Astrocyte of the cerebellum (primary cell): ENCODE measurements at regions of chr19 and their contacts with region 1.

Region 1: GRCh38 chr19:43446746-43447489 is 18.5 kb downstream of the LYPD3 start:
- DNase-seq: peak; percentile 59
- H3K4me3 ChIP-seq: no peak overlapping the region
- CTCF ChIP-seq: peak; percentile 94

Region 2: DNA sequence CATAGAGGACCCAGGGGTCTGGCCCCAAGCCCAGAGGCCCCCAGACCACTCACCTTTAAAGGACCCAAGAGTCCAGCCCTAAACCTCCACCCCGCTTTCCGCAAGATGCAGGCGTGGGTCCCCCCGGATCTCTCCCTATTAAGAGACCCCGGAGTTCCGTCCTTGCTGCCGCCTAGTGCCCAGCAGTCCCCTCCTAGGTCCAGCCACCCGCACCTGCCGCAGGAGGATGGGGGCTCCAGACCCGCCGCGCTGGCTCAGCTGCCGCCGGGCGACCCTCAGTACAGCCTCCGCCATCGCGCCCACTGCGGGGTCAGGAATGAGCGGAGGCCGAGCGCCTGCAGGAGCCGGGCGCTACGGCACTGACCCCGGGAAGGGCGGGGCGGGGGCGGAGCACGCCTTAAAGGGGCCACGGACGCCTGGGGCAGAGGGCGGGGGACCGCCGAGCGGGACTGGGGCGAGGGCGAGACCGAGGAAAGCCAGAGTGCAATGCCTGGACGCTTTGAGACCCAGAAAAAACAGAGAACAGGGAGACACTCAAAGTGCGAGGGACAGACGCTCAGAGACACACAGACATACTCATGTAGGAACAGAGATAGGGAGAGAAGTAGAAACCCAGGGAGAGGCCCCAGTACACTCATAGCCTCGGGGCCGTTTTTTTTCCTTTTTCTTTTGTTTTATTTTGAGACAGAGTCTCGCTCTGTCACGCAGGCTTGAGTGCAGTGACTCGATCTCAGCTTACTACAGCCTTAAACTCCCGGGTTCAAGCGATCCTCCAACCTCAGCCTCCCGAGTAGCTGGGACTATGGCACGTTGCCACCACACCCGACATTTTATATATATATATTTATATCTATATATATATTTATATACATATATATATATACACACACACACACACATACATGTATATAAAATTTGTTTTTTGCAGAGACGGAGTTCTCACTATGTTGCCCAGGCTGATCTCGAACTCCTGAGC is 80.3 kb after region 1 on chr19 and contains the start of gene ETHE1:
- in situ Hi-C with region 1: loop called (anchors 5 kb)
- DNase-seq: no peak
- H3K4me3 ChIP-seq: peak within 1 kb of the TSS; percentile 74
- CTCF ChIP-seq: no peak